CD4-positive, alpha-beta T cell (primary cell): ENCODE measurements at regions of chr11 and their contacts with region 1.

Region 1: DNA sequence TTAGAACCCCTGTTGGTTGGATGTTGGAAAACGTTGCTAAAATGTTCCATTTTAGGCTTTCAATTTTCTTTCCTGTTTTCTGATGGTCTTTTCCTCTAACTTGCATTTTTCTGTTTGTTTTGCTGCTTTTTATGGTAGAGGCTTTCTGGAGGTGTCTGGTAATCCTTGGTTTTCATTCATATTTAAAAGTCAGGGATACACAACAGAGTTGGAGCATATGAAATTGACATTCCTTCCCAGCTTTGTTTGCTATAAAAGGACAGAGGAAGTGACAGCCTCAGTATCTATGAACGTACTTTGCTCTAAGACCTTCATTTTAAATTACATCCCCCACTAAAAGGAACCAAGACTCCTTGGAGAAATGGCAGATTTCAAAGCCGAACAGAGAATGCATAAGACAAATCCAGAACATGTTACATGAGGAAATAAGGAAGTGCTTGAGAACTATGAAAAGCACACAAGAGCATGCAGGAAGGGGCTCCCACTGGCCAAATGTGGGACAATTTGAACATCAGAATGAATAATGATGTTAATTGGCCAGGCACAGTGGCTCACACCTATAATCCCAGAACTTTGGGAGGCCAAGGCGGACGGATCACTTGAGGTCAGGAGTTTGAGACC is 56.7 kb downstream of the PPP6R3 start:
- DNase-seq: no peak
- ATAC-seq: no peak
- H3K4me3 ChIP-seq: no peak overlapping the region
- H3K4me3 Mint-ChIP-seq: no peak overlapping the region
- H3K27ac ChIP-seq: no peak overlapping the region
- H3K27ac Mint-ChIP-seq: peak overlapping the region; percentile 64
- H3K4me1 ChIP-seq: peaks cover 2% of the 10 kb centered on the region
- H3K4me1 Mint-ChIP-seq: peaks cover 71% of the 10 kb centered on the region
- H3K27me3 ChIP-seq: no peaks in the 10 kb centered on the region
- H3K27me3 Mint-ChIP-seq: no peaks in the 10 kb centered on the region
- CTCF ChIP-seq: no peak

Region 2: GRCh38 chr11:68471360-68472340 is 45.6 kb before region 1 on chr11:
- CTCF ChIA-PET with region 1: no interaction called
- POLR2A ChIA-PET with region 1: no interaction called
- intact Hi-C with region 1: loop called in 1 of 2 experiments (anchors 5 kb)
- DNase-seq: peak in 9 of 14 experiments; percentile 18 to 78 (median 53)
- ATAC-seq: peak; percentile 89
- H3K4me3 ChIP-seq: peak overlapping the region; percentile 3
- H3K4me3 Mint-ChIP-seq: peak overlapping the region; percentile 73
- H3K27ac ChIP-seq: peak overlapping the region; percentile 6 to 9
- H3K27ac Mint-ChIP-seq: peak overlapping the region; percentile 75
- H3K4me1 ChIP-seq: peaks cover 66% of the 10 kb centered on the region
- H3K4me1 Mint-ChIP-seq: peaks cover 76% of the 10 kb centered on the region
- H3K27me3 ChIP-seq: no peaks in the 10 kb centered on the region
- H3K27me3 Mint-ChIP-seq: no peaks in the 10 kb centered on the region
- CTCF ChIP-seq: no peak

Region 3: GRCh38 chr11:68589547-68590216 is 72.5 kb after region 1 on chr11:
- CTCF ChIA-PET with region 1: no interaction called
- POLR2A ChIA-PET with region 1: no interaction called
- intact Hi-C with region 1: no loop called
- DNase-seq: no peak
- ATAC-seq: no peak
- H3K4me3 ChIP-seq: no peak overlapping the region
- H3K4me3 Mint-ChIP-seq: no peak overlapping the region
- H3K27ac ChIP-seq: no peak overlapping the region
- H3K27ac Mint-ChIP-seq: no peak overlapping the region
- H3K4me1 ChIP-seq: no peaks in the 10 kb centered on the region
- H3K4me1 Mint-ChIP-seq: no peaks in the 10 kb centered on the region
- H3K27me3 ChIP-seq: no peaks in the 10 kb centered on the region
- H3K27me3 Mint-ChIP-seq: no peaks in the 10 kb centered on the region
- CTCF ChIP-seq: no peak